Activated T-helper 2 cell treated with anti-CD3 and anti-CD28 coated beads, Interferon-gamma antibody, Interleukin-2, Interleukin-4, amounts not matched to agents 10 μg/mL and 5 μg/mL and 100 μg/mL, durations not matched to agents 14 hours and 24 hours and 36 hours (primary cell): ENCODE measurements at regions of chr7 and their contacts with region 1.

Region 1: GRCh38 chr7:42940985-42941847 is 9.0 kb downstream of the MRPL32 start:
- DNase-seq: peak; percentile 62
- H3K4me3 Mint-ChIP-seq: no peak overlapping the region
- H3K27ac Mint-ChIP-seq: no peak overlapping the region
- H3K4me1 Mint-ChIP-seq: peaks cover 21% of the 10 kb centered on the region
- H3K27me3 Mint-ChIP-seq: no peaks in the 10 kb centered on the region

Region 2: DNA sequence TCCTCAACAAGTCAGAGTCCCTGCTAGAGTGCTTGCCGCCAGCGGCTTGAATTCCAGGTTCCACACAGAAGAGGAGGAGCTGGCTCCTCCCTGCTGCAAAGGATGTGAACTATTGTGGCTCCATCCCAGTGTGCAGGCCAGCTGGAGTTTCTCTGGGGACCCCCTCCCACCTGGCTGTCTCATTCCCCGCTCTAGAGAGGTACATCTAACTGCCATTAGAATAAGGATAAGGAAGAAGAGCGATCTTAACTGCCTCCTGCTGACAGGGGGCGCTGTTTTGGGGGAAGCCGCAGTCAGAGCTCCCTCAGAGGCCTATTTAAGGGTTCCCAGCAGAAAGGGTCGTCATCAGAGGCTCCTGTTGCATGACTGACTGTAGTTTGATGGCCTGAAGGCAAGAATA is 130.4 kb after region 1 on chr7:
- intact Hi-C with region 1: loop called (anchors 10 kb)
- DNase-seq: no peak
- H3K4me3 Mint-ChIP-seq: no peak overlapping the region
- H3K27ac Mint-ChIP-seq: no peak overlapping the region
- H3K4me1 Mint-ChIP-seq: peaks cover 16% of the 10 kb centered on the region
- H3K27me3 Mint-ChIP-seq: peaks cover 8% of the 10 kb centered on the region

Region 3: DNA sequence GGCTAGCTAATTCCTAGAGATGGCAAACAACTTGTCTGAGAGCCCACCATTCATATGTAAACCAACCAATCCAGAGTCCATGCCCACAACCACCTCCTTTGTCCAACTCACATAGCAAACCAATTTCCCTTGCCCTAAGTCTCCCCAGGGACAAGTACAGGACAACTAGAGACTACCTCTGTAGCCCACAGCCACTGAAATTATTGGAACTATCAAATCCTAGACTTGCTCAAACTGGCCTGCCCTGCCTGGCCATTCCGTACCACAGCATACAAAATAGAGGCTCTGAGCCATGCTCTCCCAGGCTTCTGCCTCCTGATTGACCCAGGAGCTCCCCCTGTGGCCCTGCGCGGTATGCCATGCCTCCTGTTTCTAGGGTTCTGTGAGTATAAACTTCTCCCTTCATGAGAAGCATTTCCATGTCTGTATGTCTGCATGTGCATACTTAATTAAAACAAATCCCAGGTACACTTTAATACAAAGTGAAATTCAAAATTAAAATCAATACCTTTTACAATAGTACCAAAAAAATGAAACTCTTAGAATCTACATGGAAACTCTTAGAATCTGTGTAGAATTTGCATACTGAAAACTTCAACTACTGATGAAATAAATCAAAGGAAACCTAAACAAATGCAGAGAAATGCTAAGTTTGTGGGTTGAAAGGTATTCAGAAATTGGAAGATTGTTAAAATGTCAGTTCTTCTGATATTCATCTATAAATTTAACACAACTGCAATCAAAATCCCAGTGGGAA is 167.2 kb after region 1 on chr7:
- intact Hi-C with region 1: loop called (anchors 1 kb)
- DNase-seq: peak; percentile 24
- H3K4me3 Mint-ChIP-seq: no peak overlapping the region
- H3K27ac Mint-ChIP-seq: no peak overlapping the region
- H3K4me1 Mint-ChIP-seq: no peaks in the 10 kb centered on the region
- H3K27me3 Mint-ChIP-seq: peaks cover 56% of the 10 kb centered on the region

Region 4: DNA sequence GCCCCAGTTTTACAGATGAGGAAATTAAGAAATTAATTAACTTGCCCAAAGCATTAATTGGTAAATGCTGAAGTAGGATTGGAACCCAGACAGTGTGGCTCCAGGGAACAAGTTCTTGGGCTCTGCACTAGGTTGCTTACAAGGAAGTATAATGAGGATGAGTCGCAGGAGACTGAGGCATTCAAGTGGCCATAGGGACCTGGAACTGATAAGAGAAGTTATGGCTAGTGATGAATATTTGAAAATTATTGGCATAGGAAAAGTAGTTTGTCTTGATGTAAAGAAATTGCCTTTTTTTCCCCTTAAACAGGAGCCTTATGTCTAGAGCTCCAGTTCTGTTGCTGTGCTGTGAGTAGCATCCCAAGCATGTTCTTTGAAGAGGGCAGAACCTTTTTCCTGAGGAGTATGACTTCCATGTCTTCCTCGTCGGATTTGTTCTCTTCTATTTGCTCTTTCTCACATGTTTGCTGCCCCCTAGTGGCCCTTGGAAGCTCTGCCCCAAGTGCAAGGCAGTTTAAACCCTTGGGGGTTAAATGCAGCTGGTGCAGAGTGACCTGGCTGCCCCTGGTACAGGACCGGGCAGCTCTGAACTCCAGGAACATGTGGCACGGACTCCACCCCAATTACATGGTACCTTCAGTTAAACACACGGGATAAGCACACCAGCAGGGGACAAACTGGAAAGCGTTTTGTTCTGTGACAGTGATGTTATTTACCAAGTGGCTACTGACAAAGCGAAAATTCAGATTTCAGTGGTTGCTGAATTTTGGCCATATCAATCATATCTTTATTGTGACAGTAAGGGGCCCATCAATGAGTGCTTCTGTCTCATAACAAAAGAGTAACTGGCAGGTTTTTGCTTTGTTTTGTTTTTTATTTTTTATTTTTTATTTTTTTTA is 320.0 kb after region 1 on chr7:
- intact Hi-C with region 1: loop called (anchors 1 kb)
- DNase-seq: peak; percentile 53
- H3K4me3 Mint-ChIP-seq: no peak overlapping the region
- H3K27ac Mint-ChIP-seq: no peak overlapping the region
- H3K4me1 Mint-ChIP-seq: no peaks in the 10 kb centered on the region
- H3K27me3 Mint-ChIP-seq: peaks cover 16% of the 10 kb centered on the region

Region 5: GRCh38 chr7:43439631-43440401 is 498.6 kb after region 1 on chr7:
- intact Hi-C with region 1: loop called (anchors 5 kb)
- DNase-seq: peak; percentile 37
- H3K4me3 Mint-ChIP-seq: no peak overlapping the region
- H3K27ac Mint-ChIP-seq: no peak overlapping the region
- H3K4me1 Mint-ChIP-seq: peaks cover 4% of the 10 kb centered on the region
- H3K27me3 Mint-ChIP-seq: peaks cover 11% of the 10 kb centered on the region